ENCODE measurements at regions of chr3 and their contacts with region 1.

Region 1: GRCh38 chr3:69791919-69792399 is 52.7 kb downstream of the MITF start:
- DNase-seq: peak; percentile 47 to 90 (median 82)
- H3K4me3 ChIP-seq: peak overlapping the region in 1 of 7 experiments; percentile 19
- H3K27ac ChIP-seq: peak overlapping the region in 1 of 2 experiments; percentile 11
- H3K4me1 ChIP-seq: peaks cover 0 to 20% (median 8%) of the 10 kb centered on the region in 4 experiments
- H3K27me3 ChIP-seq: no peaks in the 10 kb centered on the region

Region 2: GRCh38 chr3:69691860-69692259 is 100.1 kb before region 1 on chr3:
- CTCF ChIA-PET with region 1: interaction called, 20 read pairs
- POLR2A ChIA-PET with region 1: no interaction called
- DNase-seq: no peak
- H3K4me3 ChIP-seq: no peak overlapping the region
- H3K27ac ChIP-seq: no peak overlapping the region
- H3K4me1 ChIP-seq: no peaks in the 10 kb centered on the region
- H3K27me3 ChIP-seq: peaks cover 0 to 2% (median 0%) of the 10 kb centered on the region in 5 experiments

Region 3: GRCh38 chr3:69781593-69781992 is 10.4 kb before region 1 on chr3:
- CTCF ChIA-PET with region 1: interaction called, 15 read pairs
- POLR2A ChIA-PET with region 1: no interaction called
- DNase-seq: no peak
- H3K4me3 ChIP-seq: no peak overlapping the region
- H3K27ac ChIP-seq: no peak overlapping the region
- H3K4me1 ChIP-seq: peaks cover 0 to 3% (median 1%) of the 10 kb centered on the region in 4 experiments
- H3K27me3 ChIP-seq: no peaks in the 10 kb centered on the region

Region 4: DNA sequence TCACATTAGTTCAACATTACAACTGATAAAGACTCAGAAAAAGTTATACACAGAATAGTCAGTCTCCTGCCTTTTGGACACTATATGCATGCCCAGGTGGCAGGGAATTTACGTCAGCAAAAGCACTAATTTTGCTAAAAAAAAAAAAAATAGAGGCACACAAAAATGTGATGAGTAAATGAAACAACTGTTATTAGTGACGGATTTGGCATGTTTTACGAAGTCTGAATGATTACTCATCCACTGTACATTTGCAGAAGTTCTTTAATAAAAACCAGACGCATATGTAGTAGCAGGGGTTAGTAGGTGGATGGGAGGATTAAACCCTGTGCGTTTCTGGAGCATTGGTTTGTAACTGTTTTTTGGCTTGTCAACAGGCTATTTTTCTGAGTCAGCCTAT is 46.3 kb after region 1 on chr3:
- CTCF ChIA-PET with region 1: no interaction called
- POLR2A ChIA-PET with region 1: no interaction called
- DNase-seq: no peak
- H3K4me3 ChIP-seq: no peak overlapping the region
- H3K27ac ChIP-seq: no peak overlapping the region
- H3K4me1 ChIP-seq: no peaks in the 10 kb centered on the region
- H3K27me3 ChIP-seq: no peaks in the 10 kb centered on the region